ENCODE measurements at regions of chr15 and their contacts with region 1.

Region 1: DNA sequence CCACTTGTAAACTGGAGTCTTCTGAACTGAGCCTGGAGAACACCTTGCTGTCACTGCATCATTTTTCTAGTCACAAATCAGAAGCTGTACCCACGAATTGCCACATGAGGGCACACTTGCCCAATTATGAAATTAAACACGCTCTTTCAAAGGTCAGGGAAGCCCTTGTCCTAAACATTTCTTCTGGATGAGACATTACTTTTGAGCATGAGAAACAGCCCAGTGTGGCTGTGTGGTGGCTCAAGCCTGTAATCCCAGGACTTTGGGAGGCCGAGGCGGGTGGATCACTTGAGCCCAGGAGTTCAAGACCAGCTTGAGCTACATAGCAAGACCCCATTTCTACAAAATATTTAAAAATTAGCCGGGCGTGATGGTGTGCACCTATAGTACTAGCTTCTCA is 27.5 kb upstream of the CFAP161 start:
- DNase-seq: peak; percentile 56
- H3K4me3 Mint-ChIP-seq: no peak overlapping the region
- H3K27ac Mint-ChIP-seq: no peak overlapping the region
- H3K4me1 Mint-ChIP-seq: peaks cover 13% of the 10 kb centered on the region
- H3K27me3 Mint-ChIP-seq: peaks cover 42% of the 10 kb centered on the region

Region 2: GRCh38 chr15:80887148-80887547 is 219.4 kb before region 1 on chr15:
- CTCF ChIA-PET with region 1: no interaction called
- POLR2A ChIA-PET with region 1: no interaction called
- DNase-seq: no peak
- H3K4me3 Mint-ChIP-seq: no peak overlapping the region
- H3K27ac Mint-ChIP-seq: no peak overlapping the region
- H3K4me1 Mint-ChIP-seq: peaks cover 5% of the 10 kb centered on the region
- H3K27me3 Mint-ChIP-seq: no peaks in the 10 kb centered on the region

Region 3: GRCh38 chr15:80977627-80978036 is 128.9 kb before region 1 on chr15:
- CTCF ChIA-PET with region 1: interaction called, 10 read pairs
- POLR2A ChIA-PET with region 1: no interaction called
- DNase-seq: peak; percentile 50
- H3K4me3 Mint-ChIP-seq: no peak overlapping the region
- H3K27ac Mint-ChIP-seq: peak overlapping the region; percentile 32
- H3K4me1 Mint-ChIP-seq: peaks cover 61% of the 10 kb centered on the region
- H3K27me3 Mint-ChIP-seq: no peaks in the 10 kb centered on the region

Region 4: DNA sequence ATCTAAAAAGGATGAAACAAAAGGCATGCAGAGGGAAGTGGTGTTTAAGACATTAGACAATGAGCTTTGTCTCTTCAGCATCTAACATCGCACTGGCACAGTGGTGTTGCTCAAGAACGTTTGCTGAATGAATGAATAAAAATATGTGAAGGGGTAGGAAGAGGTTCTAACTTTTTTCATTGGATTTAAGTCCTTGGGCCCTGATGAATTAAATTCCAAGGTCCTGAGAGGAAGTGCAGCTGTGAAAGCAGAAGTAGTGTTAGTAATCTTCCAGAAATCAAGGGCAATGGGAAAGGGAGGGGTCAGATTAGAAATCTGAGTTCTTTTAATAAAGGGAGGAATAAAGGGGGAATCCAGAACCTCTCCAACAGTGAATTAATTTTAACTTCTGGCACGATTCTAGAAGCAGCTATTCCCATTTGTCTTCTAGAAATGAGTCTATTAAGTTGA is 76.2 kb before region 1 on chr15:
- CTCF ChIA-PET with region 1: no interaction called
- POLR2A ChIA-PET with region 1: no interaction called
- DNase-seq: no peak
- H3K4me3 Mint-ChIP-seq: no peak overlapping the region
- H3K27ac Mint-ChIP-seq: no peak overlapping the region
- H3K4me1 Mint-ChIP-seq: peaks cover 48% of the 10 kb centered on the region
- H3K27me3 Mint-ChIP-seq: no peaks in the 10 kb centered on the region

Region 5: DNA sequence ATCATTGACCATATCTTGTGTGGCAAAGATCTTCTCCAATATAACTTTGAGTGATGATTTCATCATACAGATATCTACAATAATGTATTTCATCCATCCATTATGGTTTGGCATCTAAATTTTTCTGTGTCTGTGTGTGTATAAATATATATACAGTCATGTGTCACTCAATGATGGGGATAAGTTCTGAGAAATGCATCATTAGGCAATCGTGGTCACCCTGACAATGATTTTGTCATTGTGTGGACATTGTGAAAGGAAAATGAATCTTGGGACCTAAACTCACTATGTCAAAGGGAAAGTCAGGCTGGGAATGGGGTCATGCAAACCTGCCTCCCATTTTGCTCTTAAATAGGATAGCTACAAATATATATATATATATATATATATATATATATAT is 39.9 kb after region 1 on chr15:
- CTCF ChIA-PET with region 1: no interaction called
- POLR2A ChIA-PET with region 1: no interaction called
- DNase-seq: no peak
- H3K4me3 Mint-ChIP-seq: no peak overlapping the region
- H3K27ac Mint-ChIP-seq: no peak overlapping the region
- H3K4me1 Mint-ChIP-seq: peaks cover under 1% of the 10 kb centered on the region
- H3K27me3 Mint-ChIP-seq: peaks cover 13% of the 10 kb centered on the region

Region 6: DNA sequence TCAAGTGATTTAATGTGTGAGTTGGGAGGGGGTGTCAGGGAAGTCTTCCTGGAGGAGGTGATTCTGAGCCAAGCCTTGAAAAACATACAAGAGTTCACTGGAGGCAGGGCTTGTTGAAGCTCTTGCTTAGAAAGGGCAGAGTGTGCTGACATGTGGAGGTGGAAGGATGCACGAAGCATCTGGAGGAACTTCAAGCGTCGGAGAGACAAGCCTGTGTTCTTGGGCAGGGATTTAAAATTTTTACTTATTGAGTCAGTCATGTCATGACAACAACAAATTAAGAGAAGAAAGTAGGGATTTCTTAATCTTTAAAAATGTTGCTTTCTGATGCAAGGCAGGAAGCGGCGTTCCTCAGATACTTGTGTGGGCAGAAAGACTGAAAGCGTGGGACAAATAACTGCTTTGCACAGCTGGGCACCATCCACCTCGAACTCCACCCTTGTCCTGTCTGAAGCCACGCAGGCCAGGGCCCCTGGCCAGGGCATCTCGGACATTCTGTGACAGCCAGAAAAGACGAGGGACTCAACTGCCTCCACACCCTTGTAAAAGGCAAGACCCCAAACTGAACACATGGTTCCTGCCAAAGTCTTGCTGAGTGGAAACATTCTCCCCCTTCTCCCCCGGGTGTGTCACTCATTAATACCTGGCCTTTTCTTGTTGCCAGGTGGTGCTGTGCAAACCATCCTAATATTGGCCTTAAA is 83.2 kb after region 1 on chr15:
- CTCF ChIA-PET with region 1: no interaction called
- POLR2A ChIA-PET with region 1: no interaction called
- DNase-seq: no peak
- H3K4me3 Mint-ChIP-seq: no peak overlapping the region
- H3K27ac Mint-ChIP-seq: no peak overlapping the region
- H3K4me1 Mint-ChIP-seq: peaks cover 2% of the 10 kb centered on the region
- H3K27me3 Mint-ChIP-seq: peaks cover 47% of the 10 kb centered on the region

Measured in activated CD4-positive, alpha-beta memory T cell treated with anti-CD3 and anti-CD28 coated beads, Interleukin-2, amount 10 ng/mL, durations not matched to agents 7 days and 5 days (primary cell).